H1 (cell line): ENCODE measurements at regions of chr1 and their contacts with region 1.

Region 1: GRCh38 chr1:223748773-223749733 is 36.7 kb downstream of the CAPN2 start:
- DNase-seq: peak in 1 of 2 experiments; percentile 76
- H3K4me3 ChIP-seq: peak overlapping the region; percentile 43 to 77 (median 70)
- H3K27ac ChIP-seq: no peak overlapping the region
- H3K4me1 ChIP-seq: peaks cover 0 to 16% (median 9%) of the 10 kb centered on the region in 4 experiments; a peak in 6 of 7 replicates
- H3K27me3 ChIP-seq: peaks cover 3 to 21% (median 17%) of the 10 kb centered on the region in 4 experiments
- CTCF ChIP-seq: peak; percentile 70 to 85 (median 74)
- EP300 ChIP-seq: no peak
- POLR2A ChIP-seq: no peak
- RAD21 ChIP-seq: peak; percentile 64 to 78

Region 2: DNA sequence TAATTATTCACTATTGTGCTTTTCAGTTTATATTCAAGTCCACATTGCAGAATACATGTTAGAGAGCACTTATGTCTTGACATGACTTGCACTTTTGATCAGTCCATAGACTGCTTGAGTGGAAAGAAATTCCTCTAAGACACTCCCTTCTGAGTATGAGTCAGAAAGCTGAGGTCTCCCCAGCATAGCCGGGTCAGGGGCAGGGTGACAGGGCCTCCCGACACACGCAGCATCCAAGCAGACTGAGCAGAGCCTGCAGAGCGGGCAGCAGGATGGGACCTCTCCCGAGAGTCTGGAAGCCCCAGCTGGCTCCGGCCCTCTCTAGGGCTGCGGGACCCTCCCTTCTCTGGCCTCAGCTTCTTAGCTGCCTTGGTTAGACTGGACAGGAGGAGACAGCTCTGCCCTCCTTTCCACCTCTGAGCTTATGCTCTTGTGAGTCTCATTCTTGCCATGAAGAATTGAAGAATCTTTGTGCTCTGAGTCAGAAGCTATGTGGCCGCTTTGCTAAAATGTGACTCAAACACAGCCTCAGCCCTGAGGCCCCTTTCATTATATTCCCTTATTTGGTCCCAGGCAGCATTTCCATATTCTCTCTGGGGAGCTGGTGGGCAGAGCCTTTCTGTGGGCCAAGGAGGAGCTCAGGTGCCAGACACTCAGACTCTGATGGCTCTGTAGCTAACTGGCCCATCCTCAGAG is 48.0 kb before region 1 on chr1:
- CTCF ChIA-PET with region 1: interaction called, 67 read pairs
- POLR2A ChIA-PET with region 1: interaction called, 5 read pairs
- DNase-seq: no peak
- H3K4me3 ChIP-seq: no peak overlapping the region
- H3K27ac ChIP-seq: no peak overlapping the region
- H3K4me1 ChIP-seq: peaks cover 0 to 2% (median 0%) of the 10 kb centered on the region in 4 experiments; a peak in 2 of 7 replicates
- H3K27me3 ChIP-seq: no peaks in the 10 kb centered on the region
- CTCF ChIP-seq: no peak
- EP300 ChIP-seq: no peak
- POLR2A ChIP-seq: no peak
- RAD21 ChIP-seq: no peak

Region 3: DNA sequence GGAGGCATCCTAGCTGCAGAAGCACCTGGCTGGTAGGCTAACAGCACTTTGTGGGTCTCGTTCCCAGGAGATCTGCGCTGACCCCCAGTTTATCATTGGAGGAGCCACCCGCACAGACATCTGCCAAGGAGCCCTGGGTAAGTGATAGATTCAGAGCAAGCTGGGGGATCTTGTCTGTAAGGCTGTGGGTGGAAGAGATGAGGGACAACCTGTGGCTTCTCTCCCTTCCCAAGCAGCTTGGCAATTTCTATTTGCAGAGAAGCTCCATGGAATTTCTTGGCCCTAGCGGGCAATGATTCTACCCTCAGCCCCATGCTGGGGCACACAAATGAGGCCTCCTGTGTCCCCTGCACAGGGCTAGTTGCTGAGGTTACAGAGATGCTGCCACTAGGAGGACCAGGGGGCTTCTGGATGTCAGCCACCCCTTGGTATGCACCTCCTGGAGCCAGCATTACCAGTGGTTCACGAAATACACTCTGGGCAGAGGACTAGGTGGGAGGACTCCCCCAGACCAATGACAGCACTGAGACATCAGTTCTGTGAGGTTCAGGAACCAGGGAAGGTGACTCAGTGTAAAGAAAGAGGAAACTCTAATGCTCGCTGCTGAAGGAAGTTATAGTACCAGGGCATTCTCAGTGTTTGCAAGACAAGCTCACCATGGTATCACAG is 31.2 kb before region 1 on chr1:
- CTCF ChIA-PET with region 1: interaction called, 74 read pairs
- POLR2A ChIA-PET with region 1: interaction called, 10 read pairs
- DNase-seq: no peak
- H3K4me3 ChIP-seq: no peak overlapping the region
- H3K27ac ChIP-seq: no peak overlapping the region
- H3K4me1 ChIP-seq: peaks cover 4 to 26% (median 16%) of the 10 kb centered on the region in 4 experiments; a peak in 6 of 7 replicates
- H3K27me3 ChIP-seq: peaks cover 0 to 73% (median 70%) of the 10 kb centered on the region in 4 experiments; a peak in 6 of 7 replicates
- CTCF ChIP-seq: no peak
- EP300 ChIP-seq: no peak
- POLR2A ChIP-seq: no peak
- RAD21 ChIP-seq: no peak; a peak in 1 of 4 replicates

Region 4: DNA sequence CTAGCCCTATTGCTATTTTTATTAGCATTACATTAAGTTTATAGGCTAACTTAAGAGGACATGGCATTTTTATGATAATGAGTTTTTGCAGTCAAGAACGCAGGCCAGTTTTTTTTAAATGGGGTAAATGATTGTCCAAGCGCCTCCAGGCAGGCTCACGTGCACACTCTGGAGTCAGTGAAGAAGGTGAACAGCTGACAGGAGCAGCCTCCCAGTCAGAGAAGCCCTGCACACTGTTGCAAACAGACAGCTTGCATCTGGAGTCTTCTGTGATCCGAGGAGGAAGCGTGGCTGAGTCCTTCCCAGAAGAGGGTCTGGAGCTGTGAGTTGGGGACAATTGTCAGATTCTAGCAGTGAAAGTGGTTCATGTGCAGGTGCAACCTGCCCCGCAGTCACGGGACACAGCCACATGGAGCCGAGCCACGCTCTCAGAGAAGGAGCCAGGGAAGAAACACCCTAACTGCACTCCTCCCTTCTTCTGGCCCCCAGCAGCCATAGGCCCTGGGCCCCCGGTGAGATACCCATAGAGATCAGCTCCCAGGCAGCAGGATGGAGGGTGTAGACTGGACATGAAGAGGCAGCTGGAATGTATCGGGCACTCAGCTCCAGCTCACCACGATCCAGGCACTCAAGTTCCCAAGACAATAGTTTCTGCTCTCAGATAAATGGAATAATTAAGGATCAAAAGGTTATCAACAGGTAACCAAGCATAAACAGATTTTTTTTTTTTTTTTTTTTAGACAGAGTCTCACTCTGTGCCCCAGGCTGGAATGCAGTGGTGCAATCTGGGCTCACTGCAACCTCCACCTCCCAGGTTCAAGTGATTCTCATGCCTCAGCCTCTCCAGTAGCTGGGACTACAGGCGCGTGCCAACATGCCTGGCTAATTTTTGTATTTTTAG is 10.3 kb before region 1 on chr1:
- CTCF ChIA-PET with region 1: interaction called, 55 read pairs
- POLR2A ChIA-PET with region 1: interaction called, 5 read pairs
- DNase-seq: no peak
- H3K4me3 ChIP-seq: no peak overlapping the region
- H3K27ac ChIP-seq: no peak overlapping the region
- H3K4me1 ChIP-seq: peaks cover under 1 to 11% (median 5%) of the 10 kb centered on the region in 4 experiments; a peak in 4 of 7 replicates
- H3K27me3 ChIP-seq: no peaks in the 10 kb centered on the region; a peak in 1 of 7 replicates
- CTCF ChIP-seq: no peak
- EP300 ChIP-seq: no peak
- POLR2A ChIP-seq: no peak
- RAD21 ChIP-seq: no peak

Region 5: DNA sequence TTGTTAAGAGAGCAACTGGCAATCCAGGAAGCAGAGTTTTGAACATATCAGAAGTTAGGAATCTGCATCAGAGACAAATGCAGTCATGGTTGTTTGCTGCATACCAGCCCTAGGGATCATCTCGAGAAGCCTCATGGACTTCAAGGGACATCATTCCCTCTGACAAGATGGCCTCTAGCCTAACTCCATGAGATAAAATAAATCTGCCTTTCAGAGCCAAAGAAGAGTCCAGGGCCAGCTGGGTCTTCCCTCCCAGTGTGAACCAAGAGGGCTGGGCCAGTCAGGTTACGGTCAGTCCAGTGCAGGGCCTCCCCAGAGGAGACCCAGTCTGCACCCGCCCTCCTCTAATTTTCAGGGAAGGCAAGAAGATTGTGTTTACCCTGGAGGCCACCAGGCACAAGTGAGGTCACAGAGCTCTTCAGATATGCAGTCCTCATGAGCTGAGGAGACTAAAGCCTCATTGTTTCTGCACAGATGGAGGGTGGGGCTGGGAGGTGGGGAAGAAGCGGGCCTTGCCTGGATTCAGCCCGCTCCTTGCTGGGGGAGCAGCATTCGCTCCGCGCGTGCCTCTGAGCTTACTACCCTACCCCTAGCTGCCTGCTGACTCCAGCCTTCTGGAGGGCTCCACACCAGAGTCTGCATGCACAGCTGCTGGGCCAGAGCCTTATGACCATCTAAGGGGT is 16.1 kb after region 1 on chr1:
- CTCF ChIA-PET with region 1: interaction called, 24 read pairs
- POLR2A ChIA-PET with region 1: no interaction called
- DNase-seq: no peak
- H3K4me3 ChIP-seq: no peak overlapping the region
- H3K27ac ChIP-seq: no peak overlapping the region
- H3K4me1 ChIP-seq: no peaks in the 10 kb centered on the region
- H3K27me3 ChIP-seq: no peaks in the 10 kb centered on the region
- CTCF ChIP-seq: no peak
- EP300 ChIP-seq: no peak
- POLR2A ChIP-seq: 0 out of 3 replicates have a peak, but pooled peaks of 1 of the 2 experiments have one; percentile 12
- RAD21 ChIP-seq: no peak

Region 6: DNA sequence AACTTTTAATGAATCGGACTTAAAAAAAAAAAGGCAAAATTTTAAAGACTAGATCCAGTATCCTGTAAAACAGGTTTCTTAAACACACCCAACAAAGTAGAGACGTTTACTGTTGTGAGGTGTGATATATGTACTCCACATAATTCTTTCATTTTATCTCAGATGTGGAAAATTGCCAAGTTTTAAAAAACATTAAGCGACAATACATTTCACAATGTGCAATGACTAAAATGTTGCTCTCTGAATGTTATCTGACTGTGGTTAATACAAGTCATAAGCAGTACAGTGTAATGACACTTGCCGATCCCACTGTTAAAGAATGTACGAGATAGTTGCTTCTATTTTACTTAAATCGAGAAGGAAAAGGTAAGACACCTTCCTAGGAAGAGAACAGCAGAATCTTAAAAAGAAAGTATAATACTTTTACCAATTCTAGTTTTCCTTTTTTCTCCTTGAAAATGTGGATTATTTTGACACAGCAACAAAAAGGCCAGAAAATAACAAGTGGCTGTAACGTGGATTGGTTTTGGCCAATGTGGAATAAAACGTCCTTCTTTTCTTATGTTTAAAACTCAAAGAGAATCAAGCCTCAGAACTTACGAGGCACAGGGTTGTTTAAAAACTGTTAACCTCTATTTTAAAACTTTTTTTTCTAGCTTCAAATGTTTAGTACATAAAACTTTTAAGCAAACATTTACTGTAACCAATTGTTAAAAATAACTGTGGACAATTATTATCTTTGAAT is 45.3 kb after region 1 on chr1:
- CTCF ChIA-PET with region 1: no interaction called
- POLR2A ChIA-PET with region 1: no interaction called
- DNase-seq: no peak
- H3K4me3 ChIP-seq: no peak overlapping the region
- H3K27ac ChIP-seq: no peak overlapping the region
- H3K4me1 ChIP-seq: no peaks in the 10 kb centered on the region
- H3K27me3 ChIP-seq: no peaks in the 10 kb centered on the region
- CTCF ChIP-seq: no peak
- EP300 ChIP-seq: no peak
- POLR2A ChIP-seq: no peak
- RAD21 ChIP-seq: no peak